Activated B cell treated with CpG ODN at 0.5 μM for 24 hours (primary cell): ENCODE measurements at regions of chr5 and their contacts with region 1.

Region 1: GRCh38 chr5:139341650-139342422 is at the start of gene PAIP2:
- DNase-seq: peak; percentile 95
- ATAC-seq: peak; percentile 87
- H3K4me3 Mint-ChIP-seq: peak within 1 kb of the TSS; percentile 96
- H3K27ac Mint-ChIP-seq: peak within 1 kb of the TSS; percentile 95
- H3K4me1 Mint-ChIP-seq: peaks cover 52% of the 10 kb centered on the region
- H3K27me3 Mint-ChIP-seq: no peaks in the 10 kb centered on the region
- CTCF ChIP-seq: no peak
- total RNA-seq, gene PAIP2: 79.7 and 80.8 TPM in 2 replicates

Region 2: GRCh38 chr5:139197710-139198669 is 143.8 kb before region 1 on chr5 and contains the start of gene SIL1:
- CTCF ChIA-PET with region 1: no interaction called
- POLR2A ChIA-PET with region 1: interaction called, 7 read pairs
- intact Hi-C with region 1: loop called (anchors 1 kb)
- DNase-seq: peak; percentile 91
- ATAC-seq: peak; percentile 98
- H3K4me3 Mint-ChIP-seq: peak within 1 kb of the TSS; percentile 91
- H3K27ac Mint-ChIP-seq: peak within 1 kb of the TSS; percentile 90
- H3K4me1 Mint-ChIP-seq: peaks cover 21% of the 10 kb centered on the region
- H3K27me3 Mint-ChIP-seq: no peaks in the 10 kb centered on the region
- CTCF ChIP-seq: no peak
- total RNA-seq, gene SIL1: 16.1 and 22.0 TPM in 2 replicates

Region 3: GRCh38 chr5:139293504-139294373 is 48.1 kb before region 1 on chr5 and contains the start of gene MATR3:
- CTCF ChIA-PET with region 1: no interaction called
- POLR2A ChIA-PET with region 1: interaction called, 44 read pairs
- intact Hi-C with region 1: loop called (anchors 1 kb)
- DNase-seq: peak; percentile 87
- ATAC-seq: peak; percentile 90
- H3K4me3 Mint-ChIP-seq: peak within 1 kb of the TSS; percentile 97
- H3K27ac Mint-ChIP-seq: peak within 1 kb of the TSS; percentile 96
- H3K4me1 Mint-ChIP-seq: peaks cover 48% of the 10 kb centered on the region
- H3K27me3 Mint-ChIP-seq: no peaks in the 10 kb centered on the region
- CTCF ChIP-seq: no peak
- total RNA-seq, gene MATR3: 242 and 294 TPM in 2 replicates

Region 4: GRCh38 chr5:139354186-139354585 is 12.3 kb after region 1 on chr5:
- CTCF ChIA-PET with region 1: interaction called, 3 read pairs
- POLR2A ChIA-PET with region 1: interaction called, 10 read pairs
- intact Hi-C with region 1: no loop called
- DNase-seq: no peak
- ATAC-seq: no peak
- H3K4me3 Mint-ChIP-seq: no peak overlapping the region
- H3K27ac Mint-ChIP-seq: no peak overlapping the region
- H3K4me1 Mint-ChIP-seq: peaks cover 32% of the 10 kb centered on the region
- H3K27me3 Mint-ChIP-seq: no peaks in the 10 kb centered on the region
- CTCF ChIP-seq: no peak

Region 5: DNA sequence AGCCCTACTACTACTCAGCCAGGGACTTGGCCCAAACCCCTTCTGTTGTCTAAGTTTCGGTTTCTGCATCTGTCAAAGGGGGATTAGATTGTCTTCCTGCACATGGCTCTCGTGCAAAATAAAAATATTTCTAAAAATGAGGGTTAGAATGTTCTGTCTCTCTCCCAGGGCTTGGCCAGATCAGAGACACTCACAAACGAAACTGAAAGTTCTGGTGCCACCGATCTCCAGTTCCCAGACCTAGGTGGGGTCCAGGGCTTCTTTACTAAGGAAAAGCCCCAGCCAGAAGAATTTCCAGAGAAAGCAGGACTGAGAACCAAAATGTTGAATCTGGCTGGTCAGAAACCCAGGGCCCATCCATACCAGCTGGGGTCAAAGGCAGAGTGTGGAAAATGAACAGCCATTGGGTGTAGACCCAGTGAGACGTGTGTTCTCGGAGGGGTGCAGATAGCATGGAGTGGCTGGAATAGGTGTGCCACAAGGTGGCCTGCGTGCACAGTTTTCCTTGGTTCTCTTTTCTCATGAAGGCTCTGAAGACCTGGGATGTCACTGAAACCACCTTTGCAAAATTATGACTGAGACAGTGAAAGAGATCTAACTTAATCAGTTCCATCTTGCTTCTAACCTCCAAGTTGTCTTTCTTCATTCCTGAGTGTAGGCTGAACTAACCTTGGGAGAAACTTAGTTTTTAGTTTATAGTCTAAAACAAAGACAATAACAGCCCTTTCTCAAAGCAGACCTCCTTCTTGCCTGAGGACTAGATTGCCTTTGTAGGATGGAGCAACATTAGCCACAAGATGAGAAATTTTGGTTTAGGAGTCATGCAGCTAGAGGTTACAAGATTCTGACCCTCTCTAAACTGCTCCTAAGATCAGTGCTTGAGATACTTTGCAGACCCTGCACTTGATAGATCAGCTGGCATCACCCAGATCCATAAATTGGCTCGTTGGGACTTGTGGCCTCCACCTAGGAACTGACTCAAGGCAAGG is 43.5 kb after region 1 on chr5:
- CTCF ChIA-PET with region 1: interaction called, 11 read pairs
- POLR2A ChIA-PET with region 1: interaction called, 112 read pairs
- intact Hi-C with region 1: no loop called
- DNase-seq: no peak
- ATAC-seq: no peak
- H3K4me3 Mint-ChIP-seq: peak overlapping the region; percentile 60
- H3K27ac Mint-ChIP-seq: peak overlapping the region; percentile 95
- H3K4me1 Mint-ChIP-seq: peaks cover 85% of the 10 kb centered on the region
- H3K27me3 Mint-ChIP-seq: no peaks in the 10 kb centered on the region
- CTCF ChIP-seq: no peak

Region 6: GRCh38 chr5:139403787-139404483 is 62.1 kb after region 1 on chr5 and contains the start of gene SPATA24:
- CTCF ChIA-PET with region 1: no interaction called
- POLR2A ChIA-PET with region 1: interaction called, 14 read pairs
- intact Hi-C with region 1: loop called (anchors 1 kb)
- DNase-seq: peak; percentile 93
- ATAC-seq: peak; percentile 84
- H3K4me3 Mint-ChIP-seq: peak within 1 kb of the TSS; percentile 90
- H3K27ac Mint-ChIP-seq: peak within 1 kb of the TSS; percentile 96
- H3K4me1 Mint-ChIP-seq: peaks cover 53% of the 10 kb centered on the region
- H3K27me3 Mint-ChIP-seq: no peaks in the 10 kb centered on the region
- CTCF ChIP-seq: no peak
- total RNA-seq, gene SPATA24: 6.4 and 9.3 TPM in 2 replicates